ENCODE measurements at regions of chr17 and their contacts with region 1.

Region 1: DNA sequence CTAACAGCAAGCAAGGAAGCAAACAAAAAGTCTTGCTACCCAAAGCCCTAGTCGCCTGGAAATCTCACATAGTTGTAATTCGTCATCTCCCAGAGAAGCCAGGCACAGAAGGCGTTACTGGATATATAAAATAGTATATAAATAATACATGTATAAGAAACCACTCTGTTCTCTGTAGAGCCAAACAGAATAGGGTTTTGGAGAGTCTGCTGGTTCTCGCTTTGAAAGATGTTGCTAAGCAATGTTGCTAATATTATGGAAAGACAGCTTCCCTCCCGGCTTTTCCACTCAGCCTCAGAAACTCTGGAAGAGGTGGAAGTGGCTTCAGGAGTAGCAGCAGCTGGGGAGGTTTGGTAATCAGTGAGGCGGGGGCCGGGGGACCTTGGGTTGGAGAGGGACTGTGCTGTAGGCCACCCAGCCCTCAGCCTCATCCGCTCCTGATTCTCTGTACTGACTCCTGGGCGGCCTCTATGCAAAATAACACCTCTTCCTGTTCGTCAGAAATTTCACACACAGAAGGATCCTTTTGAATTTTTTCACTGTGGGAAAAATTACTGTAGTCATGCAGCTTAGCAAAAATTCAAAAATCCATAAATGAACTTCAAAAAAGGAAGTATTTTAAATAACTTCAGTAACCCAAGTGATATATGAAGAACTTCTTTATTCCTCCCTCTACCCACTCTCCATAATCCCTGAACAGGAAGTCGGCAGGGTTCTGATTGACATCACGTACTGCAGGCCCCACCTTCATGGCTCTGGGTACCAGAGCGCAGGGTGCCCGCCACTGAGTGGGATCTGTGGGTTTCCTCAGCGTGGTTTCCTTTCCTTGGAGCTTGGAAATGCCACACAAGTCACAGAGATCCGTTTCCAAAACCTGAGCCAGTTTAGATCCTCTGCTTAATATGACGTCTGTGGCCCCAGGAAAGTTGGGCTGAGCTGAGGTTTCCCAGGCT is 51.4 kb downstream of the RAP1GAP2 start:
- DNase-seq: no peak
- H3K4me3 Mint-ChIP-seq: no peak overlapping the region
- H3K27ac Mint-ChIP-seq: no peak overlapping the region
- H3K4me1 Mint-ChIP-seq: peaks cover 14% of the 10 kb centered on the region
- H3K27me3 Mint-ChIP-seq: peaks cover 4% of the 10 kb centered on the region

Region 2: GRCh38 chr17:2624292-2624731 is 223.3 kb before region 1 on chr17:
- CTCF ChIA-PET with region 1: no interaction called
- POLR2A ChIA-PET with region 1: no interaction called
- intact Hi-C with region 1: no loop called
- DNase-seq: no peak
- H3K4me3 Mint-ChIP-seq: no peak overlapping the region
- H3K27ac Mint-ChIP-seq: no peak overlapping the region
- H3K4me1 Mint-ChIP-seq: peaks cover 60% of the 10 kb centered on the region
- H3K27me3 Mint-ChIP-seq: no peaks in the 10 kb centered on the region

Region 3: DNA sequence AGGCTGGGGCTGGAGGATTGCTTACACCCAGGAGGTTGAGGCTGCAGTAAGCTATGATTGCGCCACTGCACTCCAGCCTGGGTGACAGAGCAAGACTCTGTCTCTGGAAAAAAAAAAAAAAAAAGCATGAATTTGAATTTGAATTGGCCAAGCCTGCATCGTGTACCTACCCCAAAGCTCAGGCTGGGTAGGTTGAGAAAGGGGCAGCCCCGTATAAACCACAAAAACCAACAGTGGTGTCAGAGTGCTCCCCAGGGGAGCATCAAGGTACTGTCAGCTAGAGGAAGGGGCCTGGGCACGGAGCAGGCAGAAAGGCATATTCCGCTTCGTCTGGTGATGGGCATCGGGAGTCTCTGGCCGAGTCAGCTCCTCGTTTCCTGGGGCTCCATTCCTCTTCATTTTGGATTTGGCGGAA is 10.5 kb before region 1 on chr17:
- CTCF ChIA-PET with region 1: interaction called, 31 read pairs
- POLR2A ChIA-PET with region 1: no interaction called
- intact Hi-C with region 1: no loop called
- DNase-seq: peak; percentile 77
- H3K4me3 Mint-ChIP-seq: no peak overlapping the region
- H3K27ac Mint-ChIP-seq: no peak overlapping the region
- H3K4me1 Mint-ChIP-seq: peaks cover 10% of the 10 kb centered on the region
- H3K27me3 Mint-ChIP-seq: no peaks in the 10 kb centered on the region

Region 4: DNA sequence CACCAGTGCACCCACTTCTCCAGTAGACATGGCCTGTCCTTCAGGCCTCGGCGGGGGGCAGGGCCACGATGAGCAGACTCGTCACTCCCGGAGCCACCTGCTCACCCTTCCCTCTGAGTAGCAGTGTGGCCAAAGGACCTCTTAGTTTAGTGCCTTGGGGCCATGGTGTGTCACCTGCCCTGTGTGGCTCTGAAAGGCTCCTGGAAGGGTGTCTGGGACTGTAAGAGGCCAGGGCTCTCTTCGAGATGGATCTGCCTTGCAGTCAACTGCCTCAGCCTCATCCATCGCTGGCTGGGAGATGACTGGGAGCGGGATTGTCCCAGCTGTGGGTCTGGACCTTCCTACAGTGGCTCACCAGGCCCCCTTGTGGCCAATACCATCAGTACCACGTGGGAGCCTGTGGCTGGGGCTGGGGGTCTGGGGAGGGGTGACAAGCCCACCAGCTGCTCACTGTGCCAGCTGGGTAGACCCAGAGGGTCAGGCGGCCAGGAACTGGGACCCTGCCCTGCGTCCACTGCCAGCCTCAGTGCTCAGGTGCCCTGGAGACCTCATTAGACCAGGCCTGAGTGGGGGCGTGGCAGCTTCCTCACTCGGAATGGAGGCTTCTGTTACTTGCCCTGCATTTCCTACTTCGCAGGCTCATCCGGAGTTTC is 82.3 kb after region 1 on chr17:
- CTCF ChIA-PET with region 1: interaction called, 81 read pairs
- POLR2A ChIA-PET with region 1: interaction called, 6 read pairs
- intact Hi-C with region 1: loop called (anchors 1 kb)
- DNase-seq: peak; percentile 46
- H3K4me3 Mint-ChIP-seq: no peak overlapping the region
- H3K27ac Mint-ChIP-seq: no peak overlapping the region
- H3K4me1 Mint-ChIP-seq: peaks cover 2% of the 10 kb centered on the region
- H3K27me3 Mint-ChIP-seq: no peaks in the 10 kb centered on the region

Region 5: GRCh38 chr17:3007406-3008121 is 159.9 kb after region 1 on chr17:
- CTCF ChIA-PET with region 1: interaction called, 87 read pairs
- POLR2A ChIA-PET with region 1: interaction called, 3 read pairs
- intact Hi-C with region 1: no loop called
- DNase-seq: no peak
- H3K4me3 Mint-ChIP-seq: no peak overlapping the region
- H3K27ac Mint-ChIP-seq: no peak overlapping the region
- H3K4me1 Mint-ChIP-seq: peaks cover 8% of the 10 kb centered on the region
- H3K27me3 Mint-ChIP-seq: no peaks in the 10 kb centered on the region

Measured in activated CD4-positive, alpha-beta memory T cell treated with anti-CD3 and anti-CD28 coated beads for 36 hours (primary cell).